Mammary epithelial cell (primary cell): ENCODE measurements at regions of chr6 and their contacts with region 1.

Region 1: DNA sequence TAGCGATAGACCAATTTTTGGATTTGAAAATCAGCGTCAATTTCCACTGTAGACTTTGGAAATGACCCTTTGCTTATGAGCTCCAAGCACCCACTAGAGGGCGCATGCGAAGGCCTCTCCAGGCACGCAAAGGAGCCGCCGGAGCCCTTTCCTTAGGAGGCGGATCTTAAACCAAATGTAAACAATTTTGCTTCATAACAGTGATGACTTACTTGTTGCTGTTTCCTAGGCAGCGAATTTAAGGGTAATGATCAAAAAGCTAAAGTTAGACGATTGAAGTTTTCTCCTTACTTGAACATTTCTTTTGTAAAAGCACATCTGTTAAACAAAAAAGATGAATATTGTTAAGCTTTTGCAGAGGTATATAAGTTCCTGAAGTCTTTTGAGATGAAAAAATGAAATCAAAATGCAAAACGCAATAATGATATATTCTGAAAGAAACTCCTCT is 29.2 kb upstream of the EXOC2 start:
- DNase-seq: peak; percentile 65
- H3K4me3 ChIP-seq: no peak overlapping the region
- H3K27ac ChIP-seq: no peak overlapping the region
- H3K4me1 ChIP-seq: no peaks in the 10 kb centered on the region
- H3K27me3 ChIP-seq: no peaks in the 10 kb centered on the region
- CTCF ChIP-seq: peak; percentile 94 to 95

Region 2: DNA sequence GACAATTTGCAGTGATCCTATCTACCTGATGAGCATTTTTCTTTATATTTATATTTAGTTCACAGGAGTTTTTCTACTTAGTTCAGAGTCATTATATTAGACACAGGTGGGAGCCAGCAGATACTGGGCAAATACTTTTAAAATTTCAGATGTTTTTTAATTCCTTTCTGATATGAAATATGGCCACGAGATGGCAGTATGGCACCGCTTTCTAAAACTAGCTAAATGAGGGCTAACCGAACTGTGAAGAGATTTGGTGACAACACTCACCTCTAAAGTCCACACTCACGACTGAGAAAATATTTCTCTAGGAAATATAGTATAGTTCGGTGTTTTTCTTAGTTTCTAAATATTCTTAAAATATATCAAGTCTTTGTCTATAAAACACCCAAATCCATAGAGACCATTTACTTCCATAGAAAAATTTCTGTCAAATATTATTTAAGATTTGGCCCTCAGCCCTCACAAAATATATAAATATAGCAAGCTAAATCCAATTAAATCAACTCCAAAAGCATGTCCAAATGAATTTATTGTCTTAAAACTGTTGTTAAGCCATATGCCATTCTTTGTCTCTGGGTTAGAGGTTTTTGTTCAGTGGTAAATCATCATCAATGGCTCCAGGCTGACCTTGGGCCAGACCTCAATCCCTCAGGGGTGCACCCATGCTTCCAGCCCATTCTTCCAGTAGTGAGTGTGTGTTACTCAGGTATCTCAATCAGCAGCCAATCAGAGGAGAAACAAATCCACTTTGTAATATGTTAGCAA is 128.8 kb before region 1 on chr6:
- CTCF ChIA-PET with region 1: no interaction called
- dilution Hi-C with region 1: no loop called
- in situ Hi-C with region 1: no loop called
- intact Hi-C with region 1: loop called (anchors 2 kb)
- DNase-seq: peak; percentile 26
- H3K4me3 ChIP-seq: no peak overlapping the region
- H3K27ac ChIP-seq: no peak overlapping the region
- H3K4me1 ChIP-seq: no peaks in the 10 kb centered on the region
- H3K27me3 ChIP-seq: no peaks in the 10 kb centered on the region
- CTCF ChIP-seq: peak; percentile 51 to 65

Region 3: GRCh38 chr6:1381481-1382330 is 659.6 kb after region 1 on chr6:
- CTCF ChIA-PET with region 1: no interaction called
- dilution Hi-C with region 1: no loop called
- in situ Hi-C with region 1: no loop called
- intact Hi-C with region 1: loop called (anchors 1 kb)
- DNase-seq: no peak
- H3K4me3 ChIP-seq: peak overlapping the region in 2 of 3 experiments; percentile 24 to 29
- H3K27ac ChIP-seq: no peak overlapping the region
- H3K4me1 ChIP-seq: peaks cover 13% of the 10 kb centered on the region
- H3K27me3 ChIP-seq: peaks cover 81% of the 10 kb centered on the region
- CTCF ChIP-seq: peak; percentile 57 to 59

Region 4: GRCh38 chr6:1436334-1437306 is 714.5 kb after region 1 on chr6:
- CTCF ChIA-PET with region 1: no interaction called
- dilution Hi-C with region 1: no loop called
- in situ Hi-C with region 1: no loop called
- intact Hi-C with region 1: loop called (anchors 5 kb)
- DNase-seq: peak; percentile 62
- H3K4me3 ChIP-seq: no peak overlapping the region
- H3K27ac ChIP-seq: no peak overlapping the region
- H3K4me1 ChIP-seq: peaks cover 6% of the 10 kb centered on the region
- H3K27me3 ChIP-seq: no peaks in the 10 kb centered on the region
- CTCF ChIP-seq: peak; percentile 72